CD8-positive, alpha-beta T cell (primary cell): ENCODE measurements at regions of chr2 and their contacts with region 1.

Region 1: DNA sequence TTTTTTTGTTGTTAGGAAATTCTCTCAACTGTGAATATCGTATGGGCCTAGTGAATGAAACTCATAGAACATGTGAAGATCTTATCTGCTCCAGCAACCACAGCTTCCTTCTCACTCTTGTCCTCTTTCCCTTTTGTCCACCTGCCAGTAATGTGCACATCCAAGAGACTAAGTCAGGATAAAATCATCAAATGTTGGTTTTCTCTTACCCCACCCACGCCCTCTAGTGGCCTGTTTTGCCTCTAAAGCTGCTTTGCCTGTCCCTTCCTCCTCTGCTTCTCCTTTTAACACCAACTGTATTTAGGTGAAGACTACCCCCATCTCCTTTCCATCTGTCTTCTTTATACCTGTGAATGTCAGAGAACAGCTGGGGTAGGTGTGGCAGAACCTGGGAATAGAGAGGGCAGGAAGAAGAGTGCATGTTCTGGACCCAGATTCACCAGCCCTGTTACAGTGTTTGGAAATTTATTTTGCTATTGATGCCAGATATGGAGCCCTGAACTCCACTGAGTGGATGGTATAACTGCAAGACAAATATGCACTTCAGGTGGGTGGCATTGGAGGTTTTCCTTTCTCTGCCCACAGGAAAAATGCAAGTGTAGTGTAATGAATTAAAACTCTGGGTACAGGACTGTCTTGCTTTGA is 8.4 kb upstream of the MGAT5 start:
- DNase-seq: peak; percentile 56 to 86 (median 78)
- ATAC-seq: peak; percentile 59
- H3K4me3 ChIP-seq: peak overlapping the region in 1 of 2 experiments; percentile 4
- H3K4me3 Mint-ChIP-seq: peak overlapping the region; percentile 0
- H3K27ac ChIP-seq: no peak overlapping the region
- H3K27ac Mint-ChIP-seq: peak overlapping the region; percentile 49
- H3K4me1 ChIP-seq: peaks cover 58% of the 10 kb centered on the region
- H3K4me1 Mint-ChIP-seq: peaks cover 88% of the 10 kb centered on the region
- H3K27me3 ChIP-seq: no peaks in the 10 kb centered on the region
- H3K27me3 Mint-ChIP-seq: no peaks in the 10 kb centered on the region
- CTCF ChIP-seq: peak; percentile 85

Region 2: DNA sequence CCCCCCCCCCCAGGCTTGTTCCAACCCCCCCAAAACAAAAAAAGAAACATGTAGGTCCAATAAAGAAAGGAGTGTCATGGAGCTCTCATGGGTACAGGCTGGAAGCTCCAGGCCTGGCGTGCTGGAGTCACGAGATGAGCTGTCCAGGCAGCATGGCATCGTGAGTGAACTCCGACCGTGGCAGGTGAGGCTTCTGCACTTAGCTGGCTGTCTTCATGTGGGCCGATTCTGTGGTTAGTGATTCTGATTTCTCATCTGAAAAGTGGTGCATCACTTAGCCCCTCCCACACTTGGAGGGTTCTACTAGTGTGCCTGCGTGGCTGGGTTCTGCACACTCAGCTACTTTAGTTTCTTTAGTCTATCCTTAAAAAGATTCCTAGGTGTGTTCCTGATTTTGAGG is 118.0 kb before region 1 on chr2:
- CTCF ChIA-PET with region 1: interaction called, 25 read pairs
- POLR2A ChIA-PET with region 1: interaction called, 4 read pairs
- intact Hi-C with region 1: no loop called
- DNase-seq: peak in 8 of 9 experiments; percentile 22 to 66 (median 54)
- ATAC-seq: peak; percentile 77
- H3K4me3 ChIP-seq: no peak overlapping the region
- H3K4me3 Mint-ChIP-seq: peak overlapping the region; percentile 56
- H3K27ac ChIP-seq: no peak overlapping the region
- H3K27ac Mint-ChIP-seq: peak overlapping the region; percentile 46
- H3K4me1 ChIP-seq: peaks cover 60% of the 10 kb centered on the region
- H3K4me1 Mint-ChIP-seq: peaks cover 83% of the 10 kb centered on the region
- H3K27me3 ChIP-seq: no peaks in the 10 kb centered on the region
- H3K27me3 Mint-ChIP-seq: no peaks in the 10 kb centered on the region
- CTCF ChIP-seq: no peak

Region 3: DNA sequence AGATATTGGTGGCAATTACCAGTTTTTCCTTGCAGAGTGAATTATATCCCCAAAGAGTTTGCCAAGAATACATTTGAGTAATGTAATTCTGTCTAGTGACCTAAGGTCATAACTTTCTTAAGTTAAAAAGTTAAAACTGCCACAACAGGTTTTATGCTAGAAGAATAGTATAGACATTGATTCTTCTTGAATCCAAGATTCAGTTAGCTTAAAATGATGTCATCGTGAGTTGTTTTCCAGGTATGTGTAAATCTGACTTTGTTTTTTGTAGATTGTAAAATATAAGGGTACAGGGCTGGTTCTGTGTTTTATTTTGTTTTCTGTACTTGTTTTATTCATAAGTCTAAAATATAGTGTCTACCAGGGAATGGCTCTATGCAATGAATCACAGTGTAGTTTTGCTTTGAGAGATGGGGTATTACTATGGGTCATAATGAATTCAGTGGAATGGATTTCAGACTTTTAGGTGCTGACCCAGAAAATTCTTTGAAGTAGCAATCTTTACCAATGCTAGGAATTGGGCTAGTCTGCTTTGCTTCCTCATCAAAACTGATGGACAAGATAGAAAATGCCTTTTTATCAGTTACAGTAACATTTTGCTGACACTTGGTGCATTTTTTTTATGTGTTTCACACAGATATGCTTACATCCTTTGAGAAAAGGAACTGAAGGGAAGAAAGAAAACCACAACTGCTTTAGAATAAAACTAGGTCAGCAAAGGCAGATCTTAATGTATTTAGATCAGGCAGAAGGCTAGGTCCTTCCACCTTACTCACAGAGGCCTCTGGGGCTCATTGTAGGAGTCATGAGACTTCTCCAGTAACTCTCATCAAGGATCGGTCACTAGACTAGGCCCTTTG is 12.4 kb before region 1 on chr2:
- CTCF ChIA-PET with region 1: interaction called, 26 read pairs
- POLR2A ChIA-PET with region 1: interaction called, 4 read pairs
- intact Hi-C with region 1: loop called in 1 of 2 experiments (anchors 1 kb)
- DNase-seq: peak in 2 of 9 experiments; percentile 47 to 68
- ATAC-seq: peak; percentile 71
- H3K4me3 ChIP-seq: peak overlapping the region in 1 of 2 experiments; percentile 3
- H3K4me3 Mint-ChIP-seq: peak overlapping the region; percentile 67
- H3K27ac ChIP-seq: peak overlapping the region; percentile 19 to 73
- H3K27ac Mint-ChIP-seq: peak overlapping the region; percentile 92
- H3K4me1 ChIP-seq: peaks cover 58% of the 10 kb centered on the region
- H3K4me1 Mint-ChIP-seq: peaks cover 80% of the 10 kb centered on the region
- H3K27me3 ChIP-seq: no peaks in the 10 kb centered on the region
- H3K27me3 Mint-ChIP-seq: no peaks in the 10 kb centered on the region
- CTCF ChIP-seq: peak; percentile 24

Region 4: GRCh38 chr2:134290358-134290757 is 44.9 kb after region 1 on chr2:
- CTCF ChIA-PET with region 1: interaction called, 12 read pairs
- POLR2A ChIA-PET with region 1: no interaction called
- intact Hi-C with region 1: loop called in 1 of 2 experiments (anchors 5 kb)
- DNase-seq: peak in 2 of 9 experiments; percentile 13 to 47
- ATAC-seq: peak; percentile 50
- H3K4me3 ChIP-seq: peak overlapping the region in 1 of 2 experiments; percentile 9
- H3K4me3 Mint-ChIP-seq: no peak overlapping the region
- H3K27ac ChIP-seq: no peak overlapping the region
- H3K27ac Mint-ChIP-seq: no peak overlapping the region
- H3K4me1 ChIP-seq: peaks cover 73% of the 10 kb centered on the region
- H3K4me1 Mint-ChIP-seq: peaks cover 50% of the 10 kb centered on the region
- H3K27me3 ChIP-seq: no peaks in the 10 kb centered on the region
- H3K27me3 Mint-ChIP-seq: no peaks in the 10 kb centered on the region
- CTCF ChIP-seq: no peak

Region 5: GRCh38 chr2:134668821-134669220 is 423.4 kb after region 1 on chr2:
- CTCF ChIA-PET with region 1: no interaction called
- POLR2A ChIA-PET with region 1: no interaction called
- intact Hi-C with region 1: loop called in 1 of 2 experiments (anchors 10 kb)
- DNase-seq: peak; percentile 50 to 95 (median 78)
- ATAC-seq: peak; percentile 73
- H3K4me3 ChIP-seq: peak overlapping the region; percentile 0 to 10
- H3K4me3 Mint-ChIP-seq: peak overlapping the region; percentile 42
- H3K27ac ChIP-seq: peak overlapping the region in 1 of 2 experiments; percentile 83
- H3K27ac Mint-ChIP-seq: peak overlapping the region; percentile 82
- H3K4me1 ChIP-seq: peaks cover 60% of the 10 kb centered on the region
- H3K4me1 Mint-ChIP-seq: peaks cover 82% of the 10 kb centered on the region
- H3K27me3 ChIP-seq: no peaks in the 10 kb centered on the region
- H3K27me3 Mint-ChIP-seq: peaks cover 20% of the 10 kb centered on the region
- CTCF ChIP-seq: no peak